ENCODE measurements at regions of chr1 and their contacts with region 1.

Region 1: DNA sequence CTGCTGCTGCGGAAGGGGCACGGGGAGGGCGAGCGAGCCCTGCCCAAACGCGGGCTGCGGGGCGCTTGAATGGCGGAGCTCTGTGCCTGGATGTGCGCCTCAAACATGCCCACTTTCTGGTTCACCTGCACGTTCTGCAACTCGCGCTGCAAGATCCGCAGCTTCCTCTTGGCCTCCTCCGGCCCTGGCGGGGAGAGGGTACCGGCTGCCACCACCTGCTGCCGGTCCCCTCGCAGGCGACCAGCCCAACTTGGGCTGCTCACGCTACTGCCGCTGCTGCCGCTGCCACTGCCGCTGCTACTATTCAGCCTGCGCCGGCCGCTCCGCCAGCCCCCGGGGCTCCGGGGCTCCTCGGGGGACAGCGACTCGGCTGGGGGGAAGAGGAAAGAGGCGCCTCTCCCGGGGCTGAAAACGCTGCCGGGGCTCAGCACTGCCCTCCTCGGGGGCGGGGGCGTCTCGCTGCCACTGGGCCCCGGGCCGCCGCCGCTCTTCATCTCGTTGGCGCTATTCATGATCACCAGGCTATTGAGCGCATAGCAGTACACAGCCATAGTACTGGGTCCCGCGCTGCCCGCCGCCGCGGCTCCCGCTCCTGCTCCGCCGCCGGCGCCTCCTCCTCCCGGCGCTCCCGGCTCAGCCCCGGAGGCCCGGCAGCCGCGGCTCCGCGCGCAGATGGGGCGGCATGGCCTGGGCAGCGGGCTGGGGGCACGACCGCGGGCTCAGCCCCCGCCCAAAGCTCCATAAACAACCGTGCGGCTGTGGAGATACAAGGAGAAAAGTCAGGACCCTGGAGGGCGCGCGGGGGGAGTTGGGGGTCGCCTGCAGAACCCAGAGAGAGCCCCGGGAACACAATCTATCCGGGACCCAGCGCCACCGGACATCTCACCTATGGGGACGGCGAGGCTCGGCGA is 1.9 kb downstream of the ITPKB start:
- DNase-seq: no peak
- ATAC-seq: peak; percentile 46
- H3K4me3 ChIP-seq: peak overlapping the region; percentile 98
- H3K27ac ChIP-seq: peak overlapping the region; percentile 87
- H3K4me1 ChIP-seq: peaks cover 36% of the 10 kb centered on the region
- H3K27me3 ChIP-seq: no peaks in the 10 kb centered on the region
- CTCF ChIP-seq: peak in 1 of 3 experiments; percentile 14; a peak in 3 of 6 replicates
- EP300 ChIP-seq: no peak
- POLR2A ChIP-seq: no peak
- RAD21 ChIP-seq: no peak

Region 2: GRCh38 chr1:226407497-226408284 is 329.5 kb before region 1 on chr1 and contains the start of gene PARP1:
- CTCF ChIA-PET with region 1: no interaction called
- POLR2A ChIA-PET with region 1: no interaction called
- RAD21 ChIA-PET with region 1: no interaction called
- SMC1A ChIA-PET with region 1: no interaction called
- in situ Hi-C with region 1: no loop called
- intact Hi-C with region 1: loop called (anchors 10 kb)
- DNase-seq: no peak
- ATAC-seq: peak; percentile 85
- H3K4me3 ChIP-seq: peak within 1 kb of the TSS; percentile 86
- H3K27ac ChIP-seq: peak within 1 kb of the TSS; percentile 77
- H3K4me1 ChIP-seq: peaks cover 22% of the 10 kb centered on the region
- H3K27me3 ChIP-seq: no peaks in the 10 kb centered on the region
- CTCF ChIP-seq: peak; percentile 33 to 83 (median 71); a peak in 5 of 6 replicates
- EP300 ChIP-seq: no peak; a peak in 1 of 4 replicates
- POLR2A ChIP-seq: peak; percentile 86
- RAD21 ChIP-seq: no peak
- polyA plus RNA-seq, gene PARP1: 113 to 170 TPM

Region 3: DNA sequence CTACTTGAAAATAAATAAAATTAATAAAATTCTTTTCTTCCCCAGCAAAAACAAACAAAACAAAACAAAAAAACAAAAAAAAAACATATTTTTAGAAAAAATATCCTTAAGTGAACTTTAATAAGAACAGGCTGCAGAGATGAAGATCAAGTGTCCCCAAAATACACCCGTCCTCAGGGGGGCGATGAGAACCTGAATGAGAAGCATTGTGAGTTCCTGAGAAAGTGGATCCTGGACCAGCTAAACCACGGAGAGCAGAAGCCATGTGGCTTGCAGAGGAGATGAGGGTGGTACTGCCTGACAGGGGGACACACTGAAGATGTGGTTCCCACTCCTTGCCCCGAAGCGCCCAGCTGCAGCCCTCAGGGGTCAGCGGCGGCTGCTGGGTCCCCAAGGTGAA is 87.4 kb before region 1 on chr1:
- CTCF ChIA-PET with region 1: interaction called, 7 read pairs
- POLR2A ChIA-PET with region 1: no interaction called
- RAD21 ChIA-PET with region 1: interaction called, 13 read pairs
- SMC1A ChIA-PET with region 1: interaction called, 11 read pairs
- in situ Hi-C with region 1: no loop called
- intact Hi-C with region 1: no loop called
- DNase-seq: no peak
- ATAC-seq: no peak
- H3K4me3 ChIP-seq: no peak overlapping the region
- H3K27ac ChIP-seq: no peak overlapping the region
- H3K4me1 ChIP-seq: peaks cover 22% of the 10 kb centered on the region
- H3K27me3 ChIP-seq: no peaks in the 10 kb centered on the region
- CTCF ChIP-seq: peak; percentile 16 to 38 (median 36); a peak in 3 of 6 replicates
- EP300 ChIP-seq: no peak
- POLR2A ChIP-seq: no peak
- RAD21 ChIP-seq: peak; percentile 56

Region 4: GRCh38 chr1:226697151-226697939 is 39.8 kb before region 1 on chr1:
- CTCF ChIA-PET with region 1: interaction called, 4 read pairs
- POLR2A ChIA-PET with region 1: interaction called, 8 read pairs
- RAD21 ChIA-PET with region 1: interaction called, 6 read pairs
- SMC1A ChIA-PET with region 1: interaction called, 13 read pairs
- in situ Hi-C with region 1: no loop called
- intact Hi-C with region 1: no loop called
- DNase-seq: peak; percentile 67
- ATAC-seq: peak; percentile 85
- H3K4me3 ChIP-seq: no peak overlapping the region
- H3K27ac ChIP-seq: peak overlapping the region; percentile 60
- H3K4me1 ChIP-seq: peaks cover 29% of the 10 kb centered on the region
- H3K27me3 ChIP-seq: no peaks in the 10 kb centered on the region
- CTCF ChIP-seq: no peak
- EP300 ChIP-seq: peak in 1 of 2 experiments; percentile 54; a peak in 1 of 4 replicates
- POLR2A ChIP-seq: no peak
- RAD21 ChIP-seq: no peak

Region 5: DNA sequence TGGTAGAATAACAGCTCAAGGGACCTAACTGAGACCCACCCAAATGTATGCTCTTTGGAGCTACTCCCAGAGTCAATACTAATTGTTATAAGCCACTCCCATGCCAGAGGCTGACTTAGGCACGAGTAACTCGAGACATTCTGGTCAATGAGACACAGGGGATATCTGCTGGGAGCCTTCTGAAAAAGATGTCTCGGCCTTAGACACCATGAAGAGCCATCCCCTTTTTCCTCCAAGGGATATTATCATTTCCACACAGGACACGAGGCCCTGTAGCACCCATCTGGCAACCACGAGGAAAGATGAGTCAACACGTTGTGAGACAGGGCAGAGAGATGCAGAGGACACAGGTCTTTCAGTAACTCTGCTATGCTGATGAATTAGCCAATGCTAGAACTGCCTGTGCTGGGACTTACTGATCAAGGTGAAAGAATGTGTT is 28.8 kb before region 1 on chr1:
- CTCF ChIA-PET with region 1: interaction called, 4 read pairs
- POLR2A ChIA-PET with region 1: interaction called, 6 read pairs
- RAD21 ChIA-PET with region 1: interaction called, 10 read pairs
- SMC1A ChIA-PET with region 1: interaction called, 21 read pairs
- in situ Hi-C with region 1: no loop called
- intact Hi-C with region 1: loop called (anchors 2 kb)
- DNase-seq: no peak
- ATAC-seq: no peak
- H3K4me3 ChIP-seq: no peak overlapping the region
- H3K27ac ChIP-seq: no peak overlapping the region
- H3K4me1 ChIP-seq: peaks cover 27% of the 10 kb centered on the region
- H3K27me3 ChIP-seq: no peaks in the 10 kb centered on the region
- CTCF ChIP-seq: no peak
- EP300 ChIP-seq: no peak
- POLR2A ChIP-seq: no peak
- RAD21 ChIP-seq: no peak

Region 6: GRCh38 chr1:226772446-226773139 is 35.4 kb after region 1 on chr1:
- CTCF ChIA-PET with region 1: interaction called, 4 read pairs
- POLR2A ChIA-PET with region 1: no interaction called
- RAD21 ChIA-PET with region 1: interaction called, 4 read pairs
- SMC1A ChIA-PET with region 1: interaction called, 28 read pairs
- in situ Hi-C with region 1: no loop called
- intact Hi-C with region 1: no loop called
- DNase-seq: peak; percentile 51
- ATAC-seq: peak; percentile 91
- H3K4me3 ChIP-seq: peak overlapping the region; percentile 11; the same call in 1 of the 2 replicates
- H3K27ac ChIP-seq: no peak overlapping the region
- H3K4me1 ChIP-seq: peaks cover 11% of the 10 kb centered on the region
- H3K27me3 ChIP-seq: no peaks in the 10 kb centered on the region
- CTCF ChIP-seq: no peak
- EP300 ChIP-seq: 0 out of 4 replicates have a peak, but pooled peaks of 1 of the 2 experiments have one; percentile 13
- POLR2A ChIP-seq: no peak
- RAD21 ChIP-seq: no peak

Region 7: DNA sequence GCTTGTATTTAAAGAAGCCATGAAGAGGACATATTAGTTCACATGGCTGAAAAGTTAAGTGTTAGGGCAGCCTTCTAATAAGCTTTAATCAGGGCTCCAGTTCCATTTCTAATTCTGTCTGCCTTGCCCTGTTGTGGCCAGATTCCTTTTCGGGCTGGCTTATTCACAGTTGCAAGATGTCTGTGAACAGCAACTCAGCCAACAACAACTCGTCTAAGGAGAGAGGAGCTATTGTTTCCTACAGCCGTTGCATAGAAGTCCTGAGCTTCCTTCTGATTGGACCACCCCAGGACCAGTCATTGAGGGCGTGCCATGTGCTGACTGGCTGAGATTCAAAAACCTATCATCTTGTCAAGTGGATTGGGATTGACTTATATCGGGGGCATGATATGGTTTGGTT is 184.3 kb after region 1 on chr1:
- CTCF ChIA-PET with region 1: no interaction called
- POLR2A ChIA-PET with region 1: no interaction called
- RAD21 ChIA-PET with region 1: no interaction called
- SMC1A ChIA-PET with region 1: no interaction called
- in situ Hi-C with region 1: no loop called
- intact Hi-C with region 1: no loop called
- DNase-seq: no peak
- ATAC-seq: no peak
- H3K4me3 ChIP-seq: no peak overlapping the region
- H3K27ac ChIP-seq: no peak overlapping the region
- H3K4me1 ChIP-seq: no peaks in the 10 kb centered on the region
- H3K27me3 ChIP-seq: no peaks in the 10 kb centered on the region
- CTCF ChIP-seq: no peak
- EP300 ChIP-seq: no peak
- POLR2A ChIP-seq: no peak
- RAD21 ChIP-seq: no peak

Measured in GM12878 (cell line).